ENCODE measurements at regions of chr10 and their contacts with region 1.

Region 1: GRCh38 chr10:31031558-31032257 is at the start of gene ZNF438:
- DNase-seq: peak; percentile 84 to 98 (median 95)

Region 2: GRCh38 chr10:30751678-30752331 is 279.9 kb before region 1 on chr10:
- intact Hi-C with region 1: loop called (anchors 10 kb)
- DNase-seq: peak; percentile 53 to 94 (median 85)

Region 3: DNA sequence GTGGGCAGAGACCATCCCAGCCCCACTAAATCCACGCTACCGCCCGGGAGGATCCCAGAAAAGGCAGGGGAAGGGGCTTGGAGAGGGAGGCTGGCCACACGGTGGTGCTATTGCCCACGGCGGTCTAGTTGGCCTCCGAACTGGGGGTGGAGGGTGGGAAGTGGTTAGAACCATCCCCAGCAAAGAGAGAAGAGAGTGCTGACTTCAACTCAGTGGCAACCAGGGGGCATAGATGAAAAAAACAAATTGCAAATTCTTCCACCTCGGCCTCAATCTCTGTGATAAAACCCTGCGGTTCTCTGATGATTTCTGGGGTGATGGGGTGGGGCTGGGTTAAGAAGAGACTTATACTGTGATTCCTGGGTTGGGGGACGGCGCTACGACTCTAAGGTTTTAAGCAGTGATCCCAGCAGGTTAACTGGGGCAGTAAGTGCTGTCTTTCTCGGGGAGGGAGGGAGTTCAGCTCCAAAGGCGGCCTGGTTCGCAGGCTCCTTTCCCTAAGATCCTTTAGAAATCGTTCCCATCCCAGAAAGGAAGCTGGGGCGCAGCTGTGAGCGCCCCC is 247.7 kb before region 1 on chr10:
- intact Hi-C with region 1: loop called (anchors 5 kb)
- DNase-seq: peak; percentile 84 to 97 (median 92)

Region 4: DNA sequence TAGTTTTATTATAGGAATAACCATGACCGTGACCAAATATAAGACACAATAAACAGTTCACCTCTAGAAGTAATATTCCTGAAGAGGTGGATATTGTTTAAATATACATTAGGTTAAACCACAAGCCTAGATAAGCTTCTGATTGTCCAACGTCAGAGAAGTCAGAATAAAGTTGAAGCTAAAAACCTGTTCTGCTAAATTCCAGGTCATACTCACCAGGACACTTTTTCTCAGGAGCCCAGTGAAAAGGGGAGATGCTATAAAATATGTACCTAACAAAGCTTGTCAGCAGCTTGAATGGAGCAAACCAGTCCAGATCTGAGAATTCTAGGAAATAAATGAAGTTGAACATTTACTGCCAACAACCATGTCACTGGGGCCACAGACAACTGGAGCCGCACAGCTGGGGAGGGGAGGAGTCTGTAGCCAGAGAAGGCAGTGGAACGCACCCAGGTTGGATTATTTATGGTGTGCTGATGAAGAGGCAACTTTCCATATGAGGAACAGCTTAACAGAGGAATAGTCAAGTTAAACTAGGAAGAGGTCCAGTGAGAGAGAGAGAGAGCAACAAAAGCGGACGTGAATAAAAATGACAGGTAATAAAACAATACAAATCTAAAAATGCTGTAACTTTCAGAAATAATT is 191.2 kb before region 1 on chr10:
- intact Hi-C with region 1: no loop called
- DNase-seq: no peak

Region 5: DNA sequence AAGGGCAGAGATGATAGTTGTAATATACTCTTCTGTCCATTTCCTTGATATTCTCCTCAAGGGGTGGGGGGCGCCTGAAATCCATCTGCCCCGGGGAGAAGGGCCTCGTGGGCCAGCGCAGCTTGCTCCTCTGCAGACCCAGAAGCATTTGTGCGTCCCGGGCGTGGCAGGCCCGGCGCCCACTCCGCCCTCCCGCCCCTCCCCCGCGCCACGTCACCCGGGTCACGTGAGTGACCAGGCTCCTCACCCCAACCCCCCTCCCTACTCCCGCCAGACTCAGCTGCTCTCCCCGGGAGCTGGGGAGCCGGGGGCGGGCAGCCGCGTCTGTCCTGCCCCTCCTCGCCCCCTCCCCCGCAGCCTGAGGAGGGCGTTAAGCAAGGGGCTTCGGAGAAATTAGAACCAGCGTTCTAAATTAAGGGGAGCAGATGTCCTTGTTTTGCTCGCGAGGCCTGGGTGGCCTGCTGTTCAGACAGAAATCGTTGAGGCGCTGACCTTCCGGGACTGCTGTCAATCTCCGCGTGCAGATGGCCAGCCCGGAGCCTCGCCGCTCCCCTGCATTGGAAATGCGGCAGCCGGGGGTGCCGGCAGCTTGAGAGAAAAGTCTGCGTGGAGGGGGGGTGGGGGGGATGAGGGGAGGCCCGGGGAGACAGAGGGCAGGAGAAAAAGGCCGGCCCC is 102.1 kb after region 1 on chr10:
- intact Hi-C with region 1: loop called (anchors 5 kb)
- DNase-seq: peak; percentile 65 to 94 (median 86)

Region 6: DNA sequence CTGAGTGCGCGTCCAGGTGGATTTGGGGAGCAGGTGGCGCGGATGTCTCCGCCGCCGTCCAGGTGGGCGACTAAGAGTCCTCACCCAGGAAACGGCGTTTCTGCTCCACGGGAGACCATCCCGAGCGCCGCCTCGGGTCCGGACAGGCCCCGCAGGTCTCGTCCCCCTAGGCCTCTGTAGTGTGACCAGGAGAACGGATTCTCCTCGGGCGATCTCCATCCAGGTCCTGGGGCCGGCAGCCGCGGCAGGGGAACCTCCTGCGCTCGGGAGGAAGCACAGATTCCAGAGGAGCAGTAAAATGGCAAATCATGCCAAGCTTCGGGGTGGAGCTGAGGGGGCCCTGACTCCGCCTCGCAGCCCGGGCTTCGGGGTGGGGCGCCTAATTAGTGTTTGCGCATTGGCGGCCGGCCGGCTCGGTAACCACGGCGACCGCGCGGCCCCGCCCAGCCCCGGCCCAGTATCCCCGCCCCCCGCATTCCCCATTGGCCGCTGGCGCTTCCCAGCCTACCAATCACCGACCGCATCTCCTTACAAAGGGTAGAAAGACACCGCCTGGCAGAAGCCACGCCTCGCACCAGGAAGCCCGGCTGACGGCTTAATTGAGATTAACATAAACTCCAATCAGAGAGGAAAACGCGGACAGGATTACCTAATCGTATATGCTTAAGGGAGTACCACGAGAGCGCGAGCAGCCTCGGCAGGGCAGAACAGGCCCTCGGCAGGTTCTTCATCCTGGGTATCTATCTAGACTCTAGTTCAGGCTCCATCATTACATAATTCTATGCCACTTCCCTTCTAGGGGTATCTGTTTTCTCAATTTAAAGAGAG is 728.3 kb after region 1 on chr10:
- intact Hi-C with region 1: loop called (anchors 5 kb)
- DNase-seq: peak; percentile 92 to 99 (median 97)